PC-9 (cell line): ENCODE measurements at regions of chr13 and their contacts with region 1.

Region 1: DNA sequence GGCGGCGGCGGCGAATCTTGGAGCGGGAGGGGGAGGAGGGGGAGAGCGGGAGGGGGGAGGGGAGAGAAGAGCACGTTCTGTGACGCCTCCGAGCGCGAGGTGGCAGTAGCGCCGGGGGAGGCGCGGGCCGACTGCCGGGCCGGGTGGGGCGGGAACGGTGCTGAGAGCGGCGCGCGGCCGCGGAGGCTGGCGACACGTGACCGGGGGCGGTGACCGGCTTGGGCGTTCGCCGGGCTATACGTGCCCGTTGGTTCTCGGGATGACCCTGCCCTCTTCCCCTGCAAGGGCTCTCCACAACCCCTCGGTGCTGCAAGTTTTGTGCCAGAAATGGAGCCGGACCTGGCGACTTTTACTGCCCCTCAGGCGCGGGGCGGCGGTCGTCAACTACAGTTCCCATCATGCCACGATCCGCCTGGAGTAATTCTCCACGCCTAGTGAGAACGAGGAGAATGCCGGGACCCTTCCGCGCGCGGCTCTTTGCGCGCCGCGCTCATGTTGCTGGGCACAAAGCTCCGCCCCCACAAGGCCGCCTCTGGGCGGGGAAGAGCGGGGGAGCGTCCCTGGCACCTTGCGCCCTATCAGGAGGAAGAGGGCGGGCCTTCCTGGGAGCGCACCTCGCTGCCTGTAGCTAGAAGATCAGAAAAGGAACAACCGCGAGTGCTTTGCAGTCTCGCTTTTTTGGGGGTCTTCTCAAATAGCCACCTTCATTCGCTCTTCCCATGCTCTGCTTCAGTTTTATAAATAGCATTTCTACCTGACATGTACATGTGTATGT is at the start of gene KPNA3:
- DNase-seq: peak; percentile 87 to 93
- H3K4me3 ChIP-seq: peak within 1 kb of the TSS; percentile 68
- H3K27ac ChIP-seq: peak within 1 kb of the TSS; percentile 79
- H3K4me1 ChIP-seq: peaks cover 24% of the 10 kb centered on the region
- H3K27me3 ChIP-seq: no peaks in the 10 kb centered on the region
- CTCF ChIP-seq: no peak
- total RNA-seq, gene KPNA3: 21.2 and 35.0 TPM in 2 replicates

Region 2: DNA sequence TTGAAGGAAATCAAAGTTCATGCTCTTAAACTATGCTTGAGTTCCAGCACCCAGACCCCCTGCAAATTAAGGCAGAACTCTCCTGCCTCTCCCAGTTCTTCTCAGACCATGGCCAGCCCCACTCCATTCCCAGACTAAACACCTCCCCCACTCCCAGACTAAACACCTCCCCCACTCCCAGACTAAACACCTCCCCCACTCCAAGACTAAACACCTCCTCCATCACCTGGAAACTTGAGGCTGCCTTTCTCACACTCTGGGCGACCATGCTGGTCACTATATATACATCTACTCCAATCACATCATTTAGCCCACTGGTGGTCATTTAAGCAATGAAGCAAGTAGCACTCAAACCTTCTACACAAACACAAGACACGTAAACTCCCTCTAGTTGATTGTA is 406.1 kb before region 1 on chr13:
- CTCF ChIA-PET with region 1: interaction called, 13 read pairs
- POLR2A ChIA-PET with region 1: no interaction called
- intact Hi-C with region 1: no loop called
- DNase-seq: no peak
- H3K4me3 ChIP-seq: no peak overlapping the region
- H3K27ac ChIP-seq: no peak overlapping the region
- H3K4me1 ChIP-seq: peaks cover 6% of the 10 kb centered on the region; the same call in 1 of the 2 replicates
- H3K27me3 ChIP-seq: no peaks in the 10 kb centered on the region
- CTCF ChIP-seq: no peak

Region 3: DNA sequence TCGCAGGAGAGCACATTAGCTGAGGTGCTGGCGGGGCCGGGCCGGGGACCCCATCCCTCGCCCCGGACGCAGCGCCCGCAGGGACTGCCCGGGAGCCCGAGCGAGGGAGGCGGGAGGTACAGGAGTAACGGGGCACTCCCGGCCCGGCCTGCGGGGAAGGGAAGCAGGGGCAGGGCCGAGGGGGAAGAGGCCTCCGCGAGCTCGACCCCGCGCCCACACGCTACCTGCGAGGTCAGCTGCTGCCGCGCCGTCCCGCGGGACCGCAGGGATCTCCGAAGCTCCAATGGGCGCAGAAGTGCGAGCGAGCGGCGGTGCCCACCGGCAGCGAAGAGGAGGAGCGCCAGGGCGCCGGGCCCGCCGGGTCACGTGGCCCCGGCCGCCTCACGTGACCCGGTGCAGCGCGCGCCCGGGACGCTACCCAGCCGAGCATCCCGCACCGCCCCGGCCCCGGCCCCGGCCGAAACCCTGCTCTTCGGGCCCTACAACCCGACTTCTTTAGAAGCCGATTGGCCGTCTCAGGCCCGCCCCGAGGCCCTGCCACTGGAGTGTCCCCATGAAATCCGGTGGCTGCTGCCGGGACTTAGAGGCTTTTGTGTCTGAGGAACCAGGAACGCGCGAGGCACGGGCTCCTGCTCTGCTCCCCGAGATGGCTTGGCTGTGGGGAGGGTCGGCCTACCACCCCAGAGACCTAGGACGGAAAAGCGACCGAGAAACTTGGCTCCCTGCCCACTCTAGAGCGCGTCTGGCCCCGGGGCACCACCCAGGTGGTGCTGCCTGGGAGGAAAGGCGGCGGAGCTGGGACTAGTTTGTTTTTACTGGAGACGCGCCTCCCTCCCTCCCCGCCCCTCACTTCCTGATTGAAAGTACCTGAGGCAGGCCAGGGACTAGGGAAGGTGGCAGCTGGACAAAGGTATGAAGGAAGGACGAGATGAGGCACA is 207.2 kb before region 1 on chr13 and contains the start of gene RCBTB1:
- CTCF ChIA-PET with region 1: no interaction called
- POLR2A ChIA-PET with region 1: no interaction called
- intact Hi-C with region 1: no loop called
- DNase-seq: peak; percentile 51 to 64
- H3K4me3 ChIP-seq: peak within 1 kb of the TSS; percentile 97
- H3K27ac ChIP-seq: peak within 1 kb of the TSS; percentile 48
- H3K4me1 ChIP-seq: peaks cover 33% of the 10 kb centered on the region
- H3K27me3 ChIP-seq: no peaks in the 10 kb centered on the region
- CTCF ChIP-seq: no peak
- total RNA-seq, gene RCBTB1: 14.6 and 16.1 TPM in 2 replicates

Region 4: DNA sequence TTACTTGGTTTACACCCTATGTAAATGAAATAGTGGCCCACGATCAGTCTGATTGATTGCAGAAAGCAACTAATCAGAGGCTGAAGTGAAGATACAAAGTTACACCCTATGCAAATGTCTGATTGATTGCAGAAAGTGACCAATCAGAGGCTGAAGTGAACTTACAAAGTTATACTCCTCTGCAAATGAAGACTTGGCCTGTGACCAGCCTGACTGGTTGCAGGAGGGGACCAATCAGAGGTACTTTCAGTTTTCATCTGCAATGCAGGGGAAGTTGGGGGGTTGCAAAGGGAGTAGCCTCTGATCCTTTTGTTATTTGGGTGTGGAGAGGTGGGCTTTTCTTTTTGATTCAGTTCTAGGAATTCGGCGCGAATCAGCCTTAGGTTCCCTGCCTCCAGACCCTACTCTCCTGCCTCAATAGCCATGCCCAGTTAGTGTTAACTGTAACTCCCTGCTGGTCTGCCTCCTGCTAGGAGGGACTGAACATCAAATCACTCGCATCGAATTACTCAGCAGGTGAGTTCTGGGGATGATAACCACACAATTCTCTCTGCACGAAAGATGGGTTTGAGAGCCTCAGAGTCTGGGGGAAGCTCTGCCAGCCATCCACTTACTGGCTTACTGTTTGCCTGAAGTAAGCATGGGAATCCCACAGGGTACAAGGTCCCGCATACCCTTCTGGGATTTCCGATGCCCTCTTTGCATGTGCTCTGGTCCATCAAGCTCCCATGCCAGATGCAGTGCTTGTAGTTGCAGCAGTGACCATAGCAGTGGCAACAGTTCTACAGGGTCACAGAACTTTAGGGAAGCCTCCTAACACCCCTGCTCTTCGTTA is 156.9 kb before region 1 on chr13:
- CTCF ChIA-PET with region 1: no interaction called
- POLR2A ChIA-PET with region 1: no interaction called
- intact Hi-C with region 1: no loop called
- DNase-seq: no peak
- H3K4me3 ChIP-seq: no peak overlapping the region
- H3K27ac ChIP-seq: no peak overlapping the region
- H3K4me1 ChIP-seq: peaks cover 8% of the 10 kb centered on the region; the same call in 1 of the 2 replicates
- H3K27me3 ChIP-seq: no peaks in the 10 kb centered on the region
- CTCF ChIP-seq: no peak

Region 5: DNA sequence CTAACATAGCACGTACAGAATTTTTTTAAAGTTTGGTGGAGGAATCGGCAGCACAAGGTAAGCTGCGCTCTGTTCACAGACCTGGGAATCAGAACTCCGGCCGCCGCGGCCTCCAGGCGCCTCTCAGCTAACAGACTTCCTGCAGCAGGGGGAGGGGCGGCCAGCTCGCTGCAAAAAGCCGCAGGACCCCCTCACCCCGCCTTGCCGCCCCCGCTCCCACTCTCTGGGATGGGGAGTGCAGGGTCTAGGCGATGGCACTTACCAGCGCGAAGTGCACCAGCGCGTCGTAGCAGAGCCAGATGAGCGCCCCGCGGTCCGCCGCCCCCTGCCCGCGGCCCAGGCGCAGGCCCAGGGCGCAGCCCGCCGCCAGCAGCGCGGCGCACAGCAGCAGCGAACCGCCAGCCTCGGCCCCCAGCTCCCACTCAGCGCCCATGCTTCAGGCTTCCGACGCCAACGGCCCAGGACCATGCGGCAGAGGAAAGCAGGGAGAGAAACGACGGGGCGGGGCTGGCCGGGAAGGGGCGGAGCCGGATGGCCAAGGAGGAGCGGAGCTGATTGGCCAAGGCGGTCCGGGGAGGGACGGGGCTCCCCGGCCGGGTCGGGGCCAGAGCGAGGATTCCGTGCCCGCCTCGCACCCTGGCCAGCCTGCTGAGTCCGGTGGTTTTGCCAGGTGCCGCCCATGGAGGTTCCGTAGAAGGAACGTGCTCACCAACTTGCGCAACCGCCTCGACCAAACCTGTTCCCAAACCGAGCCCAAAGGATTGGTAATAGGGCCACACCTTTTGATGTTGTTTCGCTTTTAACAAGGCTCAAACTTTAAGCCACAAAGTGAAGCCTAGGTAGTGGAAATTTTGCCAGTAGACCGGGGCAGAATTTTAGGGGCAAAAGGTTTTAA is 101.5 kb before region 1 on chr13 and contains the start of gene EBPL:
- CTCF ChIA-PET with region 1: interaction called, 5 read pairs
- POLR2A ChIA-PET with region 1: interaction called, 5 read pairs
- intact Hi-C with region 1: loop called (anchors 1 kb)
- DNase-seq: peak; percentile 92 to 96
- H3K4me3 ChIP-seq: peak within 1 kb of the TSS; percentile 71
- H3K27ac ChIP-seq: peak within 1 kb of the TSS; percentile 91
- H3K4me1 ChIP-seq: peaks cover 33% of the 10 kb centered on the region
- H3K27me3 ChIP-seq: no peaks in the 10 kb centered on the region
- CTCF ChIP-seq: no peak
- total RNA-seq, gene EBPL: 77.0 and 100 TPM in 2 replicates

Region 6: DNA sequence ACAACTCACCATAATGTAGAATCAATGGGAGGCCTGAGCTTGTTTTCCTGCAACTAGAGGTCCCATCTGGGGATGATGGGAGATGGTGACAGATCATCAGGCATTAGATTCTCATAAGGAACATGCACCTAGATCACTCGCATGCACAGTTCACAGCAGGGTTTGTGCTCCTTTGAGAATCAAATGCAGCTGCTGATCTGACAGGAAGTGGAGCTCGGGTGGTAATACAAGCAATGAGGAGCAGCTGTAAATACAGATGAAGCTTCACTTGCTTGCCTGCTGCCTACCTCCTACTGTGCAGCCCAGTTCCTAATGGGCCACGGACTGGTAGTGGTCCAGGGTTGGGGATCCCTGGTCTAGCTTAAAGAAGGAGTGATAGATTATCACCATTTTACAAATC is 33.2 kb before region 1 on chr13:
- CTCF ChIA-PET with region 1: no interaction called
- POLR2A ChIA-PET with region 1: interaction called, 13 read pairs
- intact Hi-C with region 1: loop called (anchors 5 kb)
- DNase-seq: no peak
- H3K4me3 ChIP-seq: no peak overlapping the region
- H3K27ac ChIP-seq: no peak overlapping the region
- H3K4me1 ChIP-seq: no peaks in the 10 kb centered on the region
- H3K27me3 ChIP-seq: no peaks in the 10 kb centered on the region
- CTCF ChIP-seq: no peak

Region 7: DNA sequence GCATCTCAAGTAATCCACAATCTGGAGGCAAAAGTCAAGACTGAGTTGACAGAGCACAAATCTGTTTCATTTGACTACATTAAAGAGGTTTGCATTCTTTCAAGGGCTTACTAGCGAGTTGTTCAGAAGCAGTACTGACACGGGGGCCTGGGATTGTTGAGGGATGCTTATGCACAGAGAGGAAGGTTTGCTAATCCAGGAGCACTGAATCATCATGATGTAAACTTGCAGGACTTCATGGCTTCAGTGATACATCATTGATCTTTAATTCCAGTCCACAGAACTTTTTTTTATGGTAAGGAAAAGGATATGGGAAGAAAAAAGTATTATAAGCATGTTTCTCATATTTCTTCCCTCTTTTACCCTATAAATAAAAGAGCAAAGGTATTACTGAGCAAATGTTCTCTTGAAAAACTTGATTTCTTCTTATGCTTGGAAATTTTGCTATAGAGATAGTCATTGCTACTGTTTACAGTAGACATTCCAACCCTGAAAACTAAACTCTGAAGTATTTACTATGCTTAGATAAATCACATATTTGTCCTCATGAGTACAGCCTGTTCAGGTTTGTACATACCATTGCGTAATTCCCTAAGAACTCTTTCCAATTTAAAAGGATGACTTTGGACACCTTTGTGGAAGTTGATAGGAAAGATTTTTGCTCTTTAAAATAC is 65.6 kb after region 1 on chr13:
- CTCF ChIA-PET with region 1: no interaction called
- POLR2A ChIA-PET with region 1: no interaction called
- intact Hi-C with region 1: loop called (anchors 2 kb)
- DNase-seq: peak; percentile 61 to 96
- H3K4me3 ChIP-seq: peak overlapping the region; percentile 55
- H3K27ac ChIP-seq: peak overlapping the region; percentile 98
- H3K4me1 ChIP-seq: peaks cover 33% of the 10 kb centered on the region
- H3K27me3 ChIP-seq: no peaks in the 10 kb centered on the region
- CTCF ChIP-seq: no peak